WTC11 (cell line): ENCODE measurements at regions of chr11 and their contacts with region 1.

Region 1: DNA sequence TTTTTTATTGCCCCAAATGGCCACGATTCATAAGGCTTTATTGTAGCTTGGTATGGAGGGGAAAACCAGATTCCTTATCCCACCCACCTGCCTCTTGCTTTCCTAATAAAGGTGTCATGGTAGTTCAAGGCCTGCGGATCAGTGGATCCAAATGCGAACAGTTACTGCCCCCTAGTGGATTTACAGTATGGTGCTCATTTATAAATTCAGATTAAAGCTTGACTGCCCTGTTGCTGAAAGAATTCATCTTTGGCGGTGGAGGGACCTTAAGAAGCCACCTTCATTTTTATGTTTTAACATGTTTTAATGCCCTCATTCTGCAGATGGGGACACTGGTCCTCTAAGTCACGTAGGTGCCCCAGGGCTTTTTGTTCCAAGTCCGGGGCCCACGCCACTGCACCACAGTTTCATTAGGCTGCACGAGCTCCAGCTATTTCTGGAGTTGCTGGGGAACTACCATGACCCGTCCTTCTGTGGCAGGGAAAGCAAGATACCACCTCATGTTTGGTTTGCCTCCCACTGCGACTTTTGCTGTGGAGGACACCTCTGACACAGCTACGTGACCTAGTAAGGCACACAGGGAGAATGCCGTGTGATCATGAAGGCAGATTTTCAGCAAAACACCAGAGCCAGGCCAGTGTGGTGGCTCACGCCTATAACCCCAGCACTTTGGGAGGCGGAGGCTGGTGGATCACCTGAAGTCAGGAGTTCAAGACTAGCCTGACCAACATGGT is 15.6 kb upstream of the INCENP start:
- DNase-seq: no peak
- ATAC-seq: peak; percentile 70
- H3K4me3 Mint-ChIP-seq: no peak overlapping the region
- H3K27ac Mint-ChIP-seq: no peak overlapping the region
- H3K4me1 Mint-ChIP-seq: peaks cover 14% of the 10 kb centered on the region
- H3K27me3 Mint-ChIP-seq: peaks cover 4% of the 10 kb centered on the region; the same call in 1 of the 2 replicates
- CTCF ChIP-seq: peak; percentile 62

Region 2: GRCh38 chr11:61747192-61747966 is 360.8 kb before region 1 on chr11:
- CTCF ChIA-PET with region 1: interaction called, 10 read pairs
- POLR2A ChIA-PET with region 1: no interaction called
- DNase-seq: peak; percentile 88
- ATAC-seq: peak; percentile 81
- H3K4me3 Mint-ChIP-seq: no peak overlapping the region
- H3K27ac Mint-ChIP-seq: no peak overlapping the region
- H3K4me1 Mint-ChIP-seq: peaks cover 10% of the 10 kb centered on the region
- H3K27me3 Mint-ChIP-seq: peaks cover 20% of the 10 kb centered on the region
- CTCF ChIP-seq: peak; percentile 85

Region 3: DNA sequence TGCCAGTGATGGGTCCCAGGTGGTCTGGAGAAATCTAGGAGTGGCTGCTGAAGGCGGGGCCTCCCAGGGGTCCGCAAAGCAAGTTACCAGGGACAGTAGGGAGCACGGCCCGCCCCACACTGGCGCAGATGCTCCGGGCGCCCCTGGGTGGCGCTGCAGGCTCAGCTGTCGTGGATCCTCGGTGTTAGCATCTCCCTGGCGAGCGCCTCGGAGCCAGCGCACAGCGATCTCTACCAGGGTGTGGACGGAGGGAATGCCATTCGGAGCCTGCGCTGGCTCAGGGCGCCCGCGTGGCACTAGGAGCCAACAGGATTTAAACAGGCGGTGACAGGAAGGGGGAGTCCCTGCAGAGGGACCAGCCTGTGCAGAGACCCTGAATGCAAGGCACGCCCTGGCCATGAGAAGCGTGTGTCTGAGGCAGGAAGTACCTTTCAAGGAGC is 237.0 kb before region 1 on chr11:
- CTCF ChIA-PET with region 1: interaction called, 64 read pairs
- POLR2A ChIA-PET with region 1: no interaction called
- DNase-seq: peak; percentile 92
- ATAC-seq: peak; percentile 87
- H3K4me3 Mint-ChIP-seq: peak overlapping the region; percentile 50
- H3K27ac Mint-ChIP-seq: no peak overlapping the region
- H3K4me1 Mint-ChIP-seq: peaks cover 18% of the 10 kb centered on the region
- H3K27me3 Mint-ChIP-seq: peaks cover 9% of the 10 kb centered on the region
- CTCF ChIP-seq: peak; percentile 87

Region 4: DNA sequence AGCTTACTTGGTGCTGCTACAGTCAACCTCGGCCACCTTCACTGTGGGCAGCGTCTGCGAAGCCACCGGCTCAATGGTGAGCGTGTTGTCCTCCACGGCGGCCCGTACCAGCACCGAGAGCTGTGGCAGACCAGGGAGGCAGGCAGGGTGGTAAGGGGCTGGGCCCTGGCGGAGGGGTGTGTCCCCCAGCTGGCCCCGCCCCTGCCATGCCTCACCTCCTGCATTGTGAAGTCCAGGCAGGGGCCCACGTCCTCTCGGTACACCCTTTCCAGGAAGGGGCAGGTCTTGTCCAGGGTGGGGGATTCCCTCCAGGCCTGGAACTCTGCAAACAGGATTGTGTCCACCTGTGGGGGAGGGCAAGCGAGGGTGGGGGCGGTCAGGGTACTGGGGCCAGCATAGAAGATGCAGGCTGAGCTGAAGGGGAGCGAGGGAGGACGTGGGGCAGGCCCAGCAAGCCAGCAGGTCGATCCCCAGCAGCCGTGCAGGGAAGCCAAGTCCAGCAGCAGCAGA is 203.6 kb before region 1 on chr11:
- CTCF ChIA-PET with region 1: interaction called, 136 read pairs
- POLR2A ChIA-PET with region 1: no interaction called
- DNase-seq: peak; percentile 72
- ATAC-seq: peak; percentile 84
- H3K4me3 Mint-ChIP-seq: no peak overlapping the region
- H3K27ac Mint-ChIP-seq: no peak overlapping the region
- H3K4me1 Mint-ChIP-seq: peaks cover 29% of the 10 kb centered on the region
- H3K27me3 Mint-ChIP-seq: no peaks in the 10 kb centered on the region
- CTCF ChIP-seq: no peak

Region 5: GRCh38 chr11:61954851-61955421 is 153.2 kb before region 1 on chr11:
- CTCF ChIA-PET with region 1: interaction called, 116 read pairs
- POLR2A ChIA-PET with region 1: no interaction called
- DNase-seq: peak; percentile 65
- ATAC-seq: peak; percentile 54
- H3K4me3 Mint-ChIP-seq: peak overlapping the region; percentile 56
- H3K27ac Mint-ChIP-seq: no peak overlapping the region
- H3K4me1 Mint-ChIP-seq: peaks cover 5% of the 10 kb centered on the region; the same call in 1 of the 2 replicates
- H3K27me3 Mint-ChIP-seq: peaks cover 26% of the 10 kb centered on the region
- CTCF ChIP-seq: no peak

Region 6: GRCh38 chr11:62133328-62134093 is 25.3 kb after region 1 on chr11:
- CTCF ChIA-PET with region 1: interaction called, 10 read pairs
- POLR2A ChIA-PET with region 1: no interaction called
- DNase-seq: no peak
- ATAC-seq: no peak
- H3K4me3 Mint-ChIP-seq: no peak overlapping the region
- H3K27ac Mint-ChIP-seq: no peak overlapping the region
- H3K4me1 Mint-ChIP-seq: peaks cover 3% of the 10 kb centered on the region; the same call in 1 of the 2 replicates
- H3K27me3 Mint-ChIP-seq: no peaks in the 10 kb centered on the region
- CTCF ChIP-seq: no peak